Activated B cell treated with CpG ODN at 0.5 μM for 24 hours (primary cell): ENCODE measurements at regions of chr11 and their contacts with region 1.

Region 1: GRCh38 chr11:64864473-64865285 is 13.7 kb downstream of the EHD1 start:
- DNase-seq: no peak
- ATAC-seq: no peak
- H3K4me3 Mint-ChIP-seq: peak overlapping the region; percentile 73
- H3K27ac Mint-ChIP-seq: peak overlapping the region; percentile 92
- H3K4me1 Mint-ChIP-seq: peaks cover 96% of the 10 kb centered on the region
- H3K27me3 Mint-ChIP-seq: no peaks in the 10 kb centered on the region
- CTCF ChIP-seq: no peak

Region 2: DNA sequence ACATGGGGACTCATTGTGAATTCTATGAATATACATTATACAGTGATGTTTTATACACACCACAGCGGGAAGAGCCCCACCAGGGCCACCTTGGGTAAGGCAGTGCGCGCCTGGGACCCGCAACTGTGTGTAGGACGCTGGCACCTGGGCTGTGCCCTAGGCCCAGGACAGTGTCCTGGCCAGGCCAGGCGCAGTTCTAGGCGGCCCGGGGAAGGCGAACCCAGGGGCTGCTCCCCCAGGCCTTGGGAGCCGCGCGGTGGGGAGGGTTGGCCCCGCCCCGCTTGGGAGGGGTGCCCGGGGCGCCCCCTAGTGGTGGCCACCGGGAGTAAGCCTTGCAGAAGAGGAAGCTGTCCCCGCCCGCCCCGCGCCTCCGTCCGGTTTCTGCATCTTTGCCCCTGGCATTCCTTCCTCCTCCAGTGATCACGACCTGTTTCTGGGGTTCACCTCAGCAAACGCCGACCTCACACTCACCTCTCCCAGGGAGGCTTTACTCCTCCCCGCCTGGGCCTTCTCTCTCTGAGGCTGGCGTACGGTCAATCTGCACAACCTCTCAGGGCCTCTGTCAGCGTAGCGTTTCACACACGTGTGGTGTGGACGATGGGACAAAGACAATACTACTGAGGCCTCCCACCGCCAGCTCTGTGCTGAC is 23.2 kb after region 1 on chr11:
- CTCF ChIA-PET with region 1: interaction called, 12 read pairs
- POLR2A ChIA-PET with region 1: interaction called, 1,194 read pairs
- intact Hi-C with region 1: loop called (anchors 1 kb)
- DNase-seq: peak; percentile 89
- ATAC-seq: peak; percentile 95
- H3K4me3 Mint-ChIP-seq: peak overlapping the region; percentile 80
- H3K27ac Mint-ChIP-seq: peak overlapping the region; percentile 88
- H3K4me1 Mint-ChIP-seq: peaks cover 37% of the 10 kb centered on the region
- H3K27me3 Mint-ChIP-seq: no peaks in the 10 kb centered on the region
- CTCF ChIP-seq: peak; percentile 66

Region 3: GRCh38 chr11:64894070-64894796 is 29.6 kb after region 1 on chr11:
- CTCF ChIA-PET with region 1: interaction called, 11 read pairs
- POLR2A ChIA-PET with region 1: interaction called, 1,194 read pairs
- intact Hi-C with region 1: no loop called
- DNase-seq: peak; percentile 93
- ATAC-seq: peak; percentile 99
- H3K4me3 Mint-ChIP-seq: no peak overlapping the region
- H3K27ac Mint-ChIP-seq: no peak overlapping the region
- H3K4me1 Mint-ChIP-seq: peaks cover 26% of the 10 kb centered on the region
- H3K27me3 Mint-ChIP-seq: no peaks in the 10 kb centered on the region
- CTCF ChIP-seq: peak; percentile 67